ENCODE measurements at regions of chr15 and their contacts with region 1.

Region 1: GRCh38 chr15:91852741-91853510 is 582 bp upstream of the SLCO3A1 start:
- DNase-seq: peak; percentile 89
- ATAC-seq: peak; percentile 82

Region 2: DNA sequence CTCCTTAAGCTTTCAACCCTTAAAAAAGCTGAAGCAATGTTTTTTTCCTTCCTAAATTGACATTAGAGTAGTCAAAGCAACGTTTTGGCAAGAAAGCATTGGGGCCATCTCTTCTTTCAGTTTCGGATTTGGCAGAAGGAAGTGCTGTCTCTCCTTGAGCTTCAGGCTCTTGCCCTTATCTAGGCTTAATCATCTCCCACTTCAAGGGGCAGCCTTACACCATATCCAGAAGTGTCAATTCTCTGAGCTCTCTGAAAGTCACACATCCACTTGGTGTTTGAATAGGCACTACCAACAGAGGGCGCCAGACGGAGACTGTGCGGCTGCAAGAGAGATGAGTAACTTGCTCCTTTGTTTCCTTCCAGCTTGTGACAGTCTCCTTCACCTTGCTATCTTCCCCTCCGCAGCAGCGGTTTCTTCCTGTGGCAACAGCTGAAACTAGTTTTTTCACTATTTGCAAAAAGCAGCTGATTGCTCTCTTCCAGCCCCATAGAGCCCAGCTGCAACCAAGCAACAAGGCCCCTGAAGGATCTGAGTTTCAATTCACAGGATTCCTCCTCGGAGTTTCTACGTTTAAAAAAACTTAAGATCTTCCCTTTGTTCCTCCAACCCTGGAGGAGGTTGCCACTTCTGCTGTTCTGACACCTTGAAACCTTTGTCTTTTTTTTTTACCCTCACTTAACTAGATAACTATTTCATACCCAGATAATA is 146.4 kb before region 1 on chr15:
- intact Hi-C with region 1: loop called (anchors 10 kb)
- DNase-seq: peak; percentile 68
- ATAC-seq: peak; percentile 92

Region 3: GRCh38 chr15:91921188-91921842 is 68.4 kb after region 1 on chr15:
- intact Hi-C with region 1: loop called (anchors 10 kb)
- DNase-seq: no peak
- ATAC-seq: no peak

Region 4: DNA sequence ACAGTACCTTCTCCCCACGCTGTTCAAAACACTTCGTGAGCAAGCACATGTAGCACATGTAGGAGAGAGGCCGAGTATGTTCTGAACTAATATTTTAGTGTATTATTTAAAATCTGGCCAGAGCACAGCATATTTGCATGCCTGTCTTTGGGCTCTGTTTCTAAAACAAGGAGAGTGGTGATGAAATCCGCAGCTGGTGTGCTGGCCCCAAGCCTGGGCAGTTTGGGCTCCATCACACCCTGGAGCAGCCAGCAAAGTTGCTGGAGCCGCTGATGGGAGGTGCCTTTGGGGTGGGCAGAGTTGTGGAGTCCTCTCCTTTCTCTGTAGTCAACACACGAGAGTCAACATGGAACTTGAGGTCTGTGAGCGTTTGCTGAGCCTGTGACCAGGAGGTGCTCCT is 117.2 kb after region 1 on chr15:
- intact Hi-C with region 1: loop called (anchors 10 kb)
- DNase-seq: peak; percentile 91
- ATAC-seq: peak; percentile 87

Region 5: DNA sequence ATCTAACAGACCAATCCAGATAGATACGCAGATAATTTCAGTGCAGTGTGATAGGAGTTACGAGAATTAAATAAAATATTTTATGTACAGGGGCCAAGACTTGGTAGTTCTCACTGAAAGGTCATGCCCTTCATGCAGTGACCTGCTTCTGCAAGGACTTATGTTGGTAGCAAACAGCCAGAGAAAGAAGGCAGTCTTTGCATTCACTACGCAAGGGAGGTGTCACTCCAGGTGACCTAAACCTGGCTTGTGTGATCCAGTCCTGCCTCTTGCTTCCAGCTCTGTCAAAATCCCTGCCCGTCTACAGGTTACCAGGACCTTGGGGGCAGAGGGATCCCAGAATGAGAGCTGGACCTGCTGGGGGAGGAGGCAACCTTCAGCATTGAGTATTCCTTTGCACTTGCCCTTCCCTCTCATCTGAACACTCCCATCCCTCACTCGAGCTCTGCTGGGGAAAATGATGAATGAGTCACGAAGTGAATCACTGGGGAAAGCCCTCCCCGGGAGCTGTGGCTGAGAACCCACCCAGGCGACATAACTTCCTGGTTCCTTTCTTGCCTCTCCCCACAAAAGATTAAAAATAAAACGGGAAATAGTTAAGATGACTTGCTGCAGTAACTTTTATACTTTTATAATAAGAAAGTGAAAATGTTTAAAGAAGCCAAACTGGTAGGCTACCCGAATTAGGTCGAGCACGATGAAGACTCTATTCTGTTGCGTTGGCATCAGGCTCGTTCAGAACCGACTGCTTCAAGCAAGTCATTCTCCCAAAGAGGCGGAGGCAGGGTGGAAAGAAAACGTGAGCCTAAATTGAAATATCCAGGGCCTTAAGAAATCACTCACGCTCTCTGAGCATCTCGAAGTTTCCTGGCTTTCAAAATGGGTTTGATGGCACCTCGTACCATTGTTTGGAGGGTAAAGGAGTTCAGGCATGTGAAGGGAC is 216.7 kb after region 1 on chr15:
- intact Hi-C with region 1: loop called (anchors 5 kb)
- DNase-seq: no peak
- ATAC-seq: peak; percentile 66